ENCODE measurements at regions of chr16 and their contacts with region 1.

Region 1: GRCh38 chr16:84484579-84485254 is 19.7 kb downstream of the MEAK7 start:
- DNase-seq: peak; percentile 68
- ATAC-seq: peak; percentile 87

Region 2: DNA sequence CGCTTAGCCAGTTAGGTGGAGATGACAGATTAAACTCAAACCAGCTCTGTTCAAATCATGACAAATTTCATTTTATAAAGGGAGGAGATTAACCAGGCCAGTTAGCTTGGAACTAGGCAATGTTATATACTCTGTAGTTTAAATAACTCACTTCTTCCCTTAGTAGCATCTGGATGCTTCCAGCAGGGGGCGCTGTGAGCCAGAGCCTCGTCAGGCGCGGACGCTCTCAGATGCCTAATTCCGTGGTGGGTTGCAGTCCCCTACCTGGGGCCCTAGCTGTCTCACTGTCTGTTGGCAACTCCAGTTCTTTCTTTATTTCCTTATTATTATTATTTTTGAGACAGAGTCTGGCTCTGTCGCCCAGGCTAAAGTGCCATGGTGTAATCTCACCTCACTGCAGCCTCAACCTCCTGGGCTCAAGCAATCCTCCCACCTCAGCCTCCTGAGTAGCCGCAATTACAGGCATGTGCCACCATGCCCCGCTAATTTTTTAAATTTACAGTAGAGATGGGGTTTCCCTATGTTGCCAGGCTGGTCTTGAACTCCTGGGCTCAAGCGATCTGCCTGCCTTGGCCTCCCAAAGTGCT is 207.4 kb before region 1 on chr16:
- intact Hi-C with region 1: loop called (anchors 10 kb)
- DNase-seq: peak; percentile 83
- ATAC-seq: peak; percentile 75

Region 3: GRCh38 chr16:84699712-84700445 is 215.2 kb after region 1 on chr16 and contains the start of gene USP10:
- intact Hi-C with region 1: no loop called
- DNase-seq: peak; percentile 92
- ATAC-seq: peak; percentile 93
- total RNA-seq, gene USP10: 74.5 TPM